BJ (cell line): ENCODE measurements at regions of chr1 and their contacts with region 1.

Region 1: DNA sequence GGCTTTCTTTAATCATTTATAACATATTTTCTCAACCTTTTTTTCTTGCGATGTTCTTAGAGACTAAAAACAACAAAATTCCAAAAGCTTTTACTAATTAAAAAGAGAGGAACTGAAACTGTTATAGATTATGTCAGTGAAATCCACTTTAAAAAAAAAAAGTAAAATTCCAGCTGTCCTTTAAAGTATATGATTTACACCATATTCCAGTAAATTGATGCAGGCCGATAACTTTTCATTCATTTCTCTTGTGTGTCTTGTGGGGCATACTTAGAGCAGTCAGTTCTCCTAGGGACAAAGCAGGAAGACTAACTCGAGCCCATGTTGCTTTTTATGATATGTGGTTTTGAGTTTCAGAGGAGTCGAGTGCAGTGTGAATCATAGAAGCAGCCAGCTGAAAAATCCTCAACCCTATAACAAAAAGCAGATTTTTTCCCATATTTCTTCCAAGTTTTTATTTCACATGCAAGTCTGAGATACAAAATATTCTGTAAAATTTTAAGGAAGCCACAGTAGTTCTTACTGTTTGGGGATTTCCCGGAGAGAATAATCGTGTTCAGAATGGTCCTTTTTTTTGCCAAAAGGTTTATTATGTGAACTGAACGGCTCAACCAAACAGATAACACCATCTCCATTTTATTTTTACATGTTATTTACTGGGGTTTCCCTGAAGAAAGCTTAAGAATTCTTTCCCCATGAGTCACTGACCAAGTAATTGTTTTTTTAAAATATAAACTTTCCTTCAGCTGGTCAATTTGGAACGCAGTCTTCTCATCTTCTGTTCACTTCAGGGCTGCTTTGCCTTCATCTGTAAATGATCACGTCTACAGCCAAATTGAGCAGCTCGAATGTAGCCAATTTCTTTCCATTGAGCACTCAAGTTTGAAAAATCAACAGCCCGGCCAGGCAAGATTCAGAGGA is 77.0 kb upstream of the C1orf105 start:
- DNase-seq: peak; percentile 91
- H3K4me3 ChIP-seq: peak overlapping the region; percentile 16; the same call in 1 of the 2 replicates
- H3K27me3 ChIP-seq: no peaks in the 10 kb centered on the region
- CTCF ChIP-seq: no peak

Region 2: DNA sequence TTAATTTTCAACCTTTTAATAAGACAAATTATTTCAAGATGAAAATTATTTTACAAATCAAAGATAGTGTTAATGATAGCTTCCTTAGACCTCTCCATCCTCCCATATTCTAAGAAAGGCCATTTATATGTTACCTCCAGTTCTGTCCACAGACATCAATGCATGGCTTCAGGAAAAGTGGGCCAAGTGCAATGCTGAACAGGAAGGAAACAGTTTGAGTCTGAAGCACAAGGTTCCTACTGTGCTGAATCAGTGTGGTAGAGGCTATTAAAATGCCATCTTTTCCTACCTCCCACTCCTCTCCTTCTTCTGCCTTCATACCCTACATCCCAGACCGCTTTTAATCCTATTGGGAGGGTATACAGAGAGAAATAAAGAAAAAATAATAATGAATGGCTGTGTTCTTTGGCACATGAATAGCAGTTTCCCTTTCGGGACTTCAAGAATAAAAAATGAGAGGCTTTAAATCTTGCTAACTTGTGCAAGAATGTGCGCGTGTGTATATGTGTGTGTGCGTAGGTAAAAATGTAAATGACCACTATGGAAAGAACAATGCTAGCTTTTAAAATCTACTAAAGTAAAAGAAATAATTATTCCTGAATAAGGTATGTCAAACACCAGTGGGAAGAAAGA is 14.4 kb after region 1 on chr1:
- CTCF ChIA-PET with region 1: interaction called, 4 read pairs
- POLR2A ChIA-PET with region 1: interaction called, 10 read pairs
- DNase-seq: no peak
- H3K4me3 ChIP-seq: no peak overlapping the region
- H3K27me3 ChIP-seq: no peaks in the 10 kb centered on the region
- CTCF ChIP-seq: no peak